HEK293T (cell line): ENCODE measurements at regions of chr6 and their contacts with region 1.

Region 1: GRCh38 chr6:44237813-44238433 is 9.0 kb upstream of the HSP90AB1 start:
- DNase-seq: peak; percentile 86

Region 2: GRCh38 chr6:44172731-44173500 is 65.0 kb before region 1 on chr6:
- CTCF ChIA-PET with region 1: interaction called, 15 read pairs
- POLR2A ChIA-PET with region 1: interaction called, 4 read pairs
- DNase-seq: peak; percentile 88

Region 3: GRCh38 chr6:44221291-44221960 is 16.5 kb before region 1 on chr6:
- CTCF ChIA-PET with region 1: interaction called, 14 read pairs
- POLR2A ChIA-PET with region 1: interaction called, 7 read pairs
- DNase-seq: peak; percentile 37

Region 4: GRCh38 chr6:44257025-44257752 is 19.3 kb after region 1 on chr6 and contains the start of gene SLC35B2:
- CTCF ChIA-PET with region 1: interaction called, 11 read pairs
- POLR2A ChIA-PET with region 1: interaction called, 8 read pairs
- DNase-seq: peak; percentile 78